Ovary (tissue), 10 donors: ENCODE measurements at regions of chr3 and their contacts with region 1.

Region 1: DNA sequence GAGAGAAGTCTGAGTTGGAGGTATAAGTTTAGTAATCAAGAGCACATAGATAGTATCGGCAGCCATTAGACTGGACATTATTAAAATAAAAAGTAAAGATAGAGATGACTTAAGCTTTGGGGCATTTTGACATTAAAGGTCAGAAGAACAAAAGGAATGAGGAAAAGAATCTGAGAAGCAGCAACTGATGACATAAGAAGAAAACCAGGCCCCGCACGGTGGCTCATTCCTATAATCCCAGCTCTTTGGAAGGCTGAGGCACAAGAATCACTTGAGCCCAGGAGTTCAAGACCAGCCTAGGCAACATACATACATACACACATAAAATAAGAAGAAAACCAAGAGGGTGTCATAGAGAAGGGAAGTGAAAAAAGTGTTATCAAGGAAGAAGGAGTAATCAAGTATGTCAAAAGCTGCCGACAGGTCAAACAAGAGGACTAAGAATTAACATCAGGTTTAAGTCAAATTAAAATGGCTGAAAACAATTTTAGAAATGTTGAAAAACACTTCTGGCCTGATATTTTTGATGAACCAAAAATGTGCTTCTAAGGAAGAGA is 38.9 kb downstream of the ACAP2 start:
- DNase-seq: no peak
- H3K4me3 ChIP-seq: no peak overlapping the region
- H3K27ac ChIP-seq: no peak overlapping the region
- H3K4me1 ChIP-seq: peaks cover 3% of the 10 kb centered on the region
- H3K27me3 ChIP-seq: no peaks in the 10 kb centered on the region
- CTCF ChIP-seq: no peak
- EP300 ChIP-seq: no peak
- POLR2A ChIP-seq: no peak

Region 2: DNA sequence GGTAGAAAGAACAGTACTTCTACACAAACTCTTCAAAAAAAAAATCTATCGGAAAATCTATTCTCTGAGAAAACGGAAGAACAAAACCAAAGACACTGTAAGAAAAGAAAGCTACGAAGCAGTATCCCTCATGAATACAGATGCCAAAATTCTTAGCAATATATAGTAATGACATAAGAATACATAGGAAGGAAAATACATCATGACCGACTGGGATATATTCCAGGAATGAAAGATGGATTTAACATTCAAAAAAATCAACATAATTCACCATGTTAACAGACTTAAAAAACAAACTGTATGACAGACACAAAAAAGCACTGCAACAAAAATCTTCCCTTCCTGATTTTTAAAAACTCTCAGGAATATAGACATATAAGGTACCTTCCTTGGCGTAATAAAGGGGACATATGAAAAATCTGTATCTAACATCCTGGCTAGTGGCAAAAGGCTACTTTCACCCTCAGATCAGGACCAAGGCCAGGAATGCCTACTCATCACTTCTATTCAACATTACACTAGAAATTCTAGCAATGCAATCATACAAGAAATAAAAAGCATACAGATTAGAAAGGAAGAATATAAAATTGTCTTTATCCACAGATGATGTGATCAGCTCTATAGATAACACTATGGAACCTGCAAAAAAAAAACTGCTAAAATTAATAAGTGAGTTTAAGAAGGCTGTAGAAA is 55.4 kb before region 1 on chr3:
- intact Hi-C with region 1: loop called in 1 of 4 experiments (anchors 2 kb)
- DNase-seq: no peak
- H3K4me3 ChIP-seq: no peak overlapping the region
- H3K27ac ChIP-seq: no peak overlapping the region
- H3K4me1 ChIP-seq: peaks cover 4% of the 10 kb centered on the region
- H3K27me3 ChIP-seq: no peaks in the 10 kb centered on the region
- CTCF ChIP-seq: no peak
- EP300 ChIP-seq: no peak
- POLR2A ChIP-seq: no peak